ENCODE measurements at regions of chr1 and their contacts with region 1.

Region 1: GRCh38 chr1:5514519-5515183 is 477.6 kb downstream of the NPHP4 start:
- DNase-seq: peak; percentile 41 to 96 (median 82)

Region 2: DNA sequence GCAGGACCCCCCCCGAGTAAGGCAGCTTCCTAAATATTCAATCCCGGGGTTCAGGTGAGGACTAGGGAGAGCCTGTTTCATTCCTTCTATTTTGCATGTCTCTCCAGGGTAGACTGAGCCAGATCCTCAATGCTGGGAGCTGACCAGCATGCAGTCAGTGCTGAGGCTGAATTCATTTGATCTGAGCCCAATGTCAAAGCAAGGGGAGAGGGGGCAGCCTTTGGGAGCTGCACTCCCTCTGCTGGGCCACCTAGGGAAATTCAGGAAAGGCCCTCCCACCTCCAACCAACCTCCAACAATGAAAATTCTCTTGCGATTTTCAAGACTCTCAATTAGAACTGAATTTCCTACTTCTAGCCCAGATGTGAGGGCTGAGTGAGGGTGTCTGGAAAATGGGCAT is 106.3 kb after region 1 on chr1:
- intact Hi-C with region 1: loop called (anchors 10 kb)
- DNase-seq: no peak

Region 3: DNA sequence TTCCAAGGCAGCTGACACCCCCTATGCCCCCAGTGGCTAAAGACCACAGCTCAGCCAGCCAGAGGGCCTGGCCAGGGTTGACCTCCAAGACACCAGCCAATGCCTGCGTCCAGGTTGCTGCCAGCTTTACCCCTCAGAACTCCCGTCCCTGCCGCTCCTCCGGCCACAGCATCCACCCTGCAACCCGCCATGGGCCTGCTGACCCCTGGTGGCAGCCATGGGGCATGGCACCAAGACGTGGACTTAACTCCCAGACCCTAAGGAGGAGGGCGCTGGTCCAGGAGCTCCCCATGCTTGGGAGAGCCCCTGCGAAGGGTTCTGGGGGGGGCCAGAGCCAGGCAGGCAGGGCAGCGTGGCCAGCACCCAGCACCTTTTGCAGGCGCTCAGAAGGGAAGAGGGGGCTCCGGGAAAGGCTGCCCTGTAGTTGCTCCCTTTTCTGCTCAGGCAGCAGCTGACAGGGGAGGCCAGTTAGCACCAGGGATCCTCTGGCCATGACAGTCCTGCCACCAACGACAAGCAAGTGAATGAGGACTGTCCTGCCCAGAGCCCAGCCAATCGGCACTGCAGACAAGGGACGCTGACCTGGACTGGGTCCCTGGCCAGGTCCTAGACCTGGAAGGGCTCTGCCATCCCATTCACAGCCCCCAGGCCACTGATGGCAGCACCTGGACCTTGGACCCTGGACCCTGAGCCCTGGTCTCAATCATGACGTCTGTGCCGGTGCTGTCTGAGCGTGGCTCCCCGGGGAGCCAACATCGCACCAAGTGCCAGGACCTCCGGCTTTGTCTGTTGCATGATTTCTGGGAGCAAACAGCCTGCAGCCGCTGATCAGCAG is 231.3 kb after region 1 on chr1:
- intact Hi-C with region 1: loop called (anchors 2 kb)
- DNase-seq: peak in 9 of 10 donors; percentile 63 to 96 (median 73)

Region 4: DNA sequence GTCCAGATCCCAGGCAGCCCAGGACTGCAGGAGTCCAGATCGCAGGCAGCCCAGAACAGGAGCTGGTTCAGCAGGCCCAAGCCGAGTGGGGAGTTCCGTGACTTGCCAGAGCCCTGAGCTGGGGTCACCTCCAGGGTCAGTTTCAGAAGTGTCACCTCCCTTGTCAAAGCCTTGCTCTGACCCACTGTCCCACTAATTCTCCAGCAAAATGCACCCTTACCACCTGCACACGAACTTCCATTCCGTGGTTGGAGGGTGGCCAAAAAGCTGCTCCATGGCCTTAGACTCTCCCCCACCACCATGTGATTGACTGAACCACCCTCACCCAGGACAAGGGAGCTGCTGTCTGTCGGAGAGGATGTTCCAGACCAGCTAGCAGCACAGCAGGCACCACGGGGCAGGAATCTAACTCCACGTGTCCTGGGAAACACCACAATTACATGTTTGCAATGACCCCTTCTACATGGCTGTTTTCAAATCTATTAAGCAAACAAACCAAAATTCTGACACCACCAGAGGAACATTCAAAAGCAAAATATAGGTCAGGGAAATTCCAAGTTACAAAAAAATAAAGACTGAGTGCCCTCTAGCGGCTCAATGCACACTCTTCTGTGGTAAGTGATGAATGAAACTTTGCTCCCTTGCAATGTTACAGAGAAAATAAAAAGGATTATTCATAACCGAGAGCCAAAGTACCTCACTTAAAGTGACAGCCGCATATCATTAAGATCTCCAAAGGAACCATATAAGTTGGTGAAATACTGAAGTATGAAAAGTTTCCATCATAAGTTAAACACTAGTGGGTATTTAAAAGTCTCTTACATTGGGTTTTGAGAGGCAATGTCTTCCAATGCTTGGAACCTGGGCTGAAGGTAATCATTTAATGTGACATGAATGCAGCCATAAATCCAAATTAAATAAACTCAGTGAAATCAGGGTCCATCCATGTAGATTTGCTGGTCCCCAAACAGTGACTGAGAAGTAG is 401.2 kb after region 1 on chr1:
- intact Hi-C with region 1: loop called (anchors 10 kb)
- DNase-seq: peak in 4 of 10 donors; percentile 46 to 75 (median 64)

Region 5: GRCh38 chr1:5975133-5975880 is 460.7 kb after region 1 on chr1:
- intact Hi-C with region 1: loop called (anchors 1 kb)
- DNase-seq: peak in 9 of 10 donors; percentile 59 to 96 (median 73)

Measured in posterior cingulate gyrus (tissue), 11 donors.